Psoas muscle (tissue), 8 donors: ENCODE measurements at regions of chr10 and their contacts with region 1.

Region 1: DNA sequence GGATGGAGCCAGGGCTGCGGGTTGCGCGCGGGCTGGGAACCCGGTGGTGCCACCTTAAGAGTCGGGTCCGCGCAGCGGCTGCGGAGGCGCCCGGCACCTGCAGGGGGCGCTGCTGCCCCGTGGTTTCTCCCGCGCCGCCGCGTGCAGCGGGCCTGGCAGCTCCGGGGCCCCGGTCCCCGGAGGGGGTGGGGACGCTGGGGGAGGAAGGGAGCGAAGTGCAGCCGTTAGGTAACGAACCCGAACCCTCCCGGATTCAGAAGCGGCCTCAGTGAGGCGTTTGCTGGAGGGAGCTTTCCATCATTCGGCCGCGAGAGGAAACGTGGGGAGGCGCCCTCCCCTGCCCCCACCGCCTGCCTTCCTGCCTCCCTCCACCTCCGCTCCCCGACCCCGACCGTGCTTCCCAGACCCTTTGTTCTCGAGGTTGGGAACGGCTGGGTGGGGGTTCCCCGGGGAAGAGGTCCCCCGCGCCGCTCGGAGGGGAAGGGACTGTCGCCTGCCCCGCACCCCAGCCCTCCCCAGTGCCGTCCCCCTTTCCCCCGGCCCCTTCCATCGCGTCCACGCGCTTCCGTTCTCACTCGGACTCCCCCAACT is 29.6 kb downstream of the SKIDA1 start:
- DNase-seq: peak; percentile 82 to 91
- ATAC-seq: peak; percentile 89 to 94 (median 92)
- H3K4me3 ChIP-seq: peak overlapping the region; percentile 83
- H3K27ac ChIP-seq: peak overlapping the region; percentile 30
- H3K4me1 ChIP-seq: no peaks in the 10 kb centered on the region
- H3K27me3 ChIP-seq: peaks cover 0 to 4% (median 1%) of the 10 kb centered on the region in 3 donors
- CTCF ChIP-seq: peak; percentile 98

Region 2: GRCh38 chr10:21372651-21373410 is 123.0 kb before region 1 on chr10:
- intact Hi-C with region 1: no loop called
- DNase-seq: peak; percentile 16 to 48
- ATAC-seq: peak in 2 of 4 donors; percentile 40 to 53
- H3K4me3 ChIP-seq: no peak overlapping the region
- H3K27ac ChIP-seq: no peak overlapping the region
- H3K4me1 ChIP-seq: no peaks in the 10 kb centered on the region
- H3K27me3 ChIP-seq: no peaks in the 10 kb centered on the region
- CTCF ChIP-seq: no peak

Region 3: GRCh38 chr10:21516242-21517131 is 20.6 kb after region 1 on chr10:
- intact Hi-C with region 1: loop called in 1 of 2 experiments (anchors 2 kb)
- DNase-seq: peak; percentile 73 to 91
- ATAC-seq: peak; percentile 55 to 88 (median 80)
- H3K4me3 ChIP-seq: peak overlapping the region; percentile 77
- H3K27ac ChIP-seq: peak overlapping the region; percentile 74
- H3K4me1 ChIP-seq: peaks cover 23% of the 10 kb centered on the region
- H3K27me3 ChIP-seq: peaks cover 0 to 8% (median 0%) of the 10 kb centered on the region in 3 donors
- CTCF ChIP-seq: no peak

Region 4: GRCh38 chr10:21953585-21954057 is 457.8 kb after region 1 on chr10:
- intact Hi-C with region 1: loop called (anchors 10 kb)
- DNase-seq: no peak
- ATAC-seq: peak in 1 of 4 donors; percentile 37
- H3K4me3 ChIP-seq: no peak overlapping the region
- H3K27ac ChIP-seq: no peak overlapping the region
- H3K4me1 ChIP-seq: no peaks in the 10 kb centered on the region
- H3K27me3 ChIP-seq: no peaks in the 10 kb centered on the region
- CTCF ChIP-seq: peak; percentile 36

Region 5: GRCh38 chr10:22244001-22244400 is 748.2 kb after region 1 on chr10:
- intact Hi-C with region 1: loop called in 1 of 2 experiments (anchors 10 kb)
- DNase-seq: no peak
- ATAC-seq: no peak
- H3K4me3 ChIP-seq: no peak overlapping the region
- H3K27ac ChIP-seq: no peak overlapping the region
- H3K4me1 ChIP-seq: no peaks in the 10 kb centered on the region
- H3K27me3 ChIP-seq: no peaks in the 10 kb centered on the region
- CTCF ChIP-seq: no peak

Region 6: GRCh38 chr10:22325272-22326144 is 829.7 kb after region 1 on chr10:
- intact Hi-C with region 1: loop called in 1 of 2 experiments (anchors 10 kb)
- DNase-seq: peak; percentile 74 to 83
- ATAC-seq: no peak
- H3K4me3 ChIP-seq: peak overlapping the region; percentile 87
- H3K27ac ChIP-seq: peak overlapping the region; percentile 24
- H3K4me1 ChIP-seq: peaks cover 11% of the 10 kb centered on the region
- H3K27me3 ChIP-seq: no peaks in the 10 kb centered on the region
- CTCF ChIP-seq: no peak